Activated naive CD4-positive, alpha-beta T cell treated with anti-CD3 and anti-CD28 coated beads for 36 hours (primary cell): ENCODE measurements at regions of chr7 and their contacts with region 1.

Region 1: GRCh38 chr7:54758702-54759592 is at the start of gene SEC61G:
- DNase-seq: peak; percentile 97
- H3K4me3 Mint-ChIP-seq: peak within 1 kb of the TSS; percentile 100
- H3K27ac Mint-ChIP-seq: peak within 1 kb of the TSS; percentile 92
- H3K4me1 Mint-ChIP-seq: peaks cover 18% of the 10 kb centered on the region
- H3K27me3 Mint-ChIP-seq: peaks cover 2% of the 10 kb centered on the region
- total RNA-seq, gene SEC61G: 121 to 126 TPM

Region 2: GRCh38 chr7:54773472-54774399 is 14.8 kb after region 1 on chr7:
- CTCF ChIA-PET with region 1: interaction called, 28 read pairs
- intact Hi-C with region 1: no loop called
- DNase-seq: peak; percentile 86
- H3K4me3 Mint-ChIP-seq: peak overlapping the region; percentile 63
- H3K27ac Mint-ChIP-seq: peak overlapping the region; percentile 22
- H3K4me1 Mint-ChIP-seq: peaks cover 3% of the 10 kb centered on the region
- H3K27me3 Mint-ChIP-seq: peaks cover 17% of the 10 kb centered on the region

Region 3: GRCh38 chr7:54802841-54803240 is 43.9 kb after region 1 on chr7:
- CTCF ChIA-PET with region 1: no interaction called
- intact Hi-C with region 1: loop called (anchors 2 kb)
- DNase-seq: peak; percentile 58
- H3K4me3 Mint-ChIP-seq: no peak overlapping the region
- H3K27ac Mint-ChIP-seq: no peak overlapping the region
- H3K4me1 Mint-ChIP-seq: no peaks in the 10 kb centered on the region
- H3K27me3 Mint-ChIP-seq: peaks cover 9% of the 10 kb centered on the region

Region 4: GRCh38 chr7:55415173-55415778 is 656.3 kb after region 1 on chr7:
- CTCF ChIA-PET with region 1: no interaction called
- intact Hi-C with region 1: loop called (anchors 5 kb)
- DNase-seq: peak; percentile 92
- H3K4me3 Mint-ChIP-seq: no peak overlapping the region
- H3K27ac Mint-ChIP-seq: no peak overlapping the region
- H3K4me1 Mint-ChIP-seq: peaks cover 2% of the 10 kb centered on the region
- H3K27me3 Mint-ChIP-seq: no peaks in the 10 kb centered on the region

Region 5: GRCh38 chr7:55887821-55888247 is 1128.9 kb after region 1 on chr7:
- CTCF ChIA-PET with region 1: no interaction called
- intact Hi-C with region 1: loop called (anchors 5 kb)
- DNase-seq: no peak
- H3K4me3 Mint-ChIP-seq: peak overlapping the region; percentile 72
- H3K27ac Mint-ChIP-seq: peak overlapping the region; percentile 59
- H3K4me1 Mint-ChIP-seq: peaks cover 5% of the 10 kb centered on the region
- H3K27me3 Mint-ChIP-seq: no peaks in the 10 kb centered on the region

Region 6: DNA sequence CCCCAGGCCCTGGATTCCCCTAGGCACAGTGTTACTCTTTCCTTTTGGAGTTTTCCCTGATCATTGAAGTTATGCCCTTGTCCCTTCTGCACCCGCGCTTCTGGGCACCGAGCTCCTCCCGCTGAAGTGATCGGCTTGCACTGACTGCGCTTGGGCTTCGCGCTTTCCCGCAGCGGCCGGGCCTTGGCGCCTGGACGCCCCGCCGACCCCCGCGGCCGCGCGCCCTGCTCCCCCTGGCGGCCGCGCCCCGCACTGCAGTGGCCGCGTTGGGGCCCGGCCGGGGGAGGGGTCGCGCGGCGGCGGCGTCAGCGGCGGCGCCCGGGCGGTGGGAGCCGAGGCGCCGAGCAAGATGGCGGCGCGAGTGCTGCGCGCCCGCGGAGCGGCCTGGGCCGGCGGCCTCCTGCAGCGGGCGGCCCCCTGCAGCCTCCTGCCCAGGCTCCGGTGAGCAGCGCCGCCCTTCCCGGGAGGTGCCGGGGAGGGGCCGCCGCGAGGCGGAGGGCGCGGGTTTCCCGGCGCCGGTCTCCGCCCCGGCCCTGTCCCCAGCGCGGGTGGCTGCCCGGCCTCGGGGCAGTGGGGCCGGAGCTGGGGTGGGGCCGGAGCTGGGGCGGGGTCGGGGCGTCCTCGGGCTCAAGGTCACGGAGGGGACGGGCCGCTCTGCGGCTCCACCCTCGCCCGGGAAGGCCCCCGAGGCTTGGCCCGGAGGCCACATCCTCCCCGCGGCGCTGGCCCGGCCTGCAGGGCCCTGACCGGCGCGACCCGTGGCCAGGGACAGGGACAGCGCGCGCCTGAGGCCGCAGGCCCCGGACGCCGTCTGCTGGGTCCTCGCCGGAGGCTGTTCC is 1205.5 kb after region 1 on chr7 and contains the start of gene NIPSNAP2:
- CTCF ChIA-PET with region 1: no interaction called
- intact Hi-C with region 1: loop called (anchors 10 kb)
- DNase-seq: peak; percentile 46
- H3K4me3 Mint-ChIP-seq: peak within 1 kb of the TSS; percentile 77
- H3K27ac Mint-ChIP-seq: peak within 1 kb of the TSS; percentile 79
- H3K4me1 Mint-ChIP-seq: peaks cover 36% of the 10 kb centered on the region
- H3K27me3 Mint-ChIP-seq: no peaks in the 10 kb centered on the region
- total RNA-seq, gene NIPSNAP2: 57.3 to 57.6 TPM

Region 7: DNA sequence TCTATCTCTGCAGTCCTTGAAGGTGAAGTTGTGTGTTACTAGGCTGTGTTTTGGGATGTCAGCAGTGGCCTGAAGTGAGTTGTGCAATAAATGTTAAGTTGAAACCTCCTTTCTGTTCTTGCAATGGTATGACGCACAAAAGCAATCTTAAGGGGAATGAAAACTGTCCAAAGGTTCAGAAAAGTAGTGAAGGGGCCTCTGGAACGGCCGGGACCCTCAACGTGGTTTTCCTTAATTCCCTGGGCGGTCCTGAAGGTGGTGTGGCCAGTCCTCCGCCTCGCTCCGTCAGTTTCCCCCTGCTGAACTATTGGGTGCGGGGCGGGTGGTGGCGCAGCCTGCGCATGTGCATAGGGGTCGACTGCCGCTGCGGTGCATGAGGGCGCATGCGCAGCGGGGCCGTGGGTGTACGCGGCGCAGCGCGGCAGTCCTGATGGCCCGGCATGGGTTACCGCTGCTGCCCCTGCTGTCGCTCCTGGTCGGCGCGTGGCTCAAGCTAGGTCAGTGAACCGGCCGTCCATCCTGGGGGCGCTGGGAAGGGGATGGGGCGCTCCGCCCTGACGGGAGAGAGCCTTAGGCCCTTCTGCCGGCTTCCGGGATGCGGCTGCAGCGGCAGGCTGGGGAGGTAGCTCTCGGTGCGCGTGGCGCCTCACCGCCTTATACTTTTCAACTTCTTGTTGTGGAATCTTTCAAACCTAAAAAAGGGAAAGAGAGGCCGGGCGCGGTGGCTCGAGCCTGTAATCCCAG is 1305.1 kb after region 1 on chr7 and contains the start of gene SUMF2:
- CTCF ChIA-PET with region 1: no interaction called
- intact Hi-C with region 1: loop called (anchors 5 kb)
- DNase-seq: peak; percentile 90
- H3K4me3 Mint-ChIP-seq: peak within 1 kb of the TSS; percentile 88
- H3K27ac Mint-ChIP-seq: peak within 1 kb of the TSS; percentile 91
- H3K4me1 Mint-ChIP-seq: peaks cover 41% of the 10 kb centered on the region
- H3K27me3 Mint-ChIP-seq: no peaks in the 10 kb centered on the region
- total RNA-seq, gene SUMF2: 143 to 159 TPM